GM12878 (cell line): ENCODE measurements at regions of chr4 and their contacts with region 1.

Region 1: GRCh38 chr4:37452952-37453280 is 208.4 kb downstream of the NWD2 start:
- DNase-seq: peak; percentile 23
- ATAC-seq: peak; percentile 92
- H3K4me3 ChIP-seq: no peak overlapping the region
- H3K27ac ChIP-seq: no peak overlapping the region
- H3K4me1 ChIP-seq: peaks cover 3% of the 10 kb centered on the region; the same call in 1 of the 2 replicates
- H3K27me3 ChIP-seq: peaks cover 8 to 13% of the 10 kb centered on the region in 2 experiments
- CTCF ChIP-seq: peak; percentile 55 to 76 (median 63); a peak in 5 of 6 replicates
- EP300 ChIP-seq: no peak
- POLR2A ChIP-seq: no peak
- RAD21 ChIP-seq: peak; percentile 80

Region 2: DNA sequence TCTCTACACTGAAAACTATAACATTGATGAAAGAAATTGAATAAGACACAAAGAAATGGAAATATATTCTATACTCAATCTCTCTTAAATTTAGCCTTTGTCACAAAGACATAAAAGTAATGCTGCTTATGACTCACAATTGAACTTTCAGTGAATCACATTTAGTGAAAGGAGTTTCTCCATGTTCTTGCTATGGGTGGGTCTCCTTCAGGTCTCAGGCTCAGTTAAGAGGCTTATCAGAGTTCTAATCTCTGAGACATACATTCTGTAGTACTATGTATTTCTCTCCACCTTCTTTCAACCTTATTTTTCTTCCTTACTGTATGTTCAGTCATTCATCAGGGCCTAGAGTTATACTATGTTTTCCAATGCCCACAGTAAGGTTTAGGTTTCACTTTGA is 950.6 kb before region 1 on chr4:
- CTCF ChIA-PET with region 1: no interaction called
- POLR2A ChIA-PET with region 1: no interaction called
- RAD21 ChIA-PET with region 1: no interaction called
- SMC1A ChIA-PET with region 1: no interaction called
- in situ Hi-C with region 1: no loop called
- intact Hi-C with region 1: no loop called
- DNase-seq: no peak
- ATAC-seq: no peak
- H3K4me3 ChIP-seq: no peak overlapping the region
- H3K27ac ChIP-seq: no peak overlapping the region
- H3K4me1 ChIP-seq: no peaks in the 10 kb centered on the region
- H3K27me3 ChIP-seq: no peaks in the 10 kb centered on the region
- CTCF ChIP-seq: no peak
- EP300 ChIP-seq: no peak
- POLR2A ChIP-seq: no peak
- RAD21 ChIP-seq: no peak

Region 3: GRCh38 chr4:37441276-37441994 is 11.5 kb before region 1 on chr4:
- CTCF ChIA-PET with region 1: interaction called, 21 read pairs
- POLR2A ChIA-PET with region 1: no interaction called
- RAD21 ChIA-PET with region 1: no interaction called
- SMC1A ChIA-PET with region 1: interaction called, 5 read pairs
- in situ Hi-C with region 1: no loop called
- intact Hi-C with region 1: no loop called
- DNase-seq: no peak
- ATAC-seq: no peak
- H3K4me3 ChIP-seq: no peak overlapping the region
- H3K27ac ChIP-seq: no peak overlapping the region
- H3K4me1 ChIP-seq: no peaks in the 10 kb centered on the region
- H3K27me3 ChIP-seq: no peaks in the 10 kb centered on the region
- CTCF ChIP-seq: no peak
- EP300 ChIP-seq: no peak
- POLR2A ChIP-seq: no peak
- RAD21 ChIP-seq: no peak

Region 4: GRCh38 chr4:37561803-37562207 is 108.9 kb after region 1 on chr4:
- CTCF ChIA-PET with region 1: interaction called, 36 read pairs
- POLR2A ChIA-PET with region 1: no interaction called
- RAD21 ChIA-PET with region 1: interaction called, 6 read pairs
- SMC1A ChIA-PET with region 1: interaction called, 27 read pairs
- in situ Hi-C with region 1: loop called (anchors 5 kb)
- intact Hi-C with region 1: loop called (anchors 1 kb)
- DNase-seq: peak; percentile 34
- ATAC-seq: peak; percentile 92
- H3K4me3 ChIP-seq: no peak overlapping the region
- H3K27ac ChIP-seq: no peak overlapping the region
- H3K4me1 ChIP-seq: no peaks in the 10 kb centered on the region
- H3K27me3 ChIP-seq: no peaks in the 10 kb centered on the region
- CTCF ChIP-seq: no peak
- EP300 ChIP-seq: peak; percentile 50 to 73; a peak in 2 of 4 replicates
- POLR2A ChIP-seq: no peak
- RAD21 ChIP-seq: no peak

Region 5: GRCh38 chr4:37567841-37568240 is 114.9 kb after region 1 on chr4:
- CTCF ChIA-PET with region 1: interaction called, 36 read pairs
- POLR2A ChIA-PET with region 1: no interaction called
- RAD21 ChIA-PET with region 1: interaction called, 6 read pairs
- SMC1A ChIA-PET with region 1: interaction called, 27 read pairs
- in situ Hi-C with region 1: loop called (anchors 5 kb)
- intact Hi-C with region 1: loop called (anchors 1 kb)
- DNase-seq: no peak
- ATAC-seq: no peak
- H3K4me3 ChIP-seq: no peak overlapping the region
- H3K27ac ChIP-seq: no peak overlapping the region
- H3K4me1 ChIP-seq: no peaks in the 10 kb centered on the region
- H3K27me3 ChIP-seq: no peaks in the 10 kb centered on the region
- CTCF ChIP-seq: no peak
- EP300 ChIP-seq: no peak
- POLR2A ChIP-seq: no peak
- RAD21 ChIP-seq: no peak

Region 6: GRCh38 chr4:37793562-37793961 is 340.6 kb after region 1 on chr4:
- CTCF ChIA-PET with region 1: no interaction called
- POLR2A ChIA-PET with region 1: no interaction called
- RAD21 ChIA-PET with region 1: no interaction called
- SMC1A ChIA-PET with region 1: interaction called, 3 read pairs
- in situ Hi-C with region 1: no loop called
- intact Hi-C with region 1: loop called (anchors 2 kb)
- DNase-seq: no peak
- ATAC-seq: peak; percentile 79
- H3K4me3 ChIP-seq: no peak overlapping the region
- H3K27ac ChIP-seq: no peak overlapping the region
- H3K4me1 ChIP-seq: no peaks in the 10 kb centered on the region
- H3K27me3 ChIP-seq: no peaks in the 10 kb centered on the region
- CTCF ChIP-seq: peak; percentile 58 to 59 (median 59); a peak in 5 of 6 replicates
- EP300 ChIP-seq: no peak
- POLR2A ChIP-seq: no peak
- RAD21 ChIP-seq: peak; percentile 87

Region 7: GRCh38 chr4:38034986-38035882 is 582.3 kb after region 1 on chr4:
- CTCF ChIA-PET with region 1: interaction called, 6 read pairs
- POLR2A ChIA-PET with region 1: no interaction called
- RAD21 ChIA-PET with region 1: no interaction called
- SMC1A ChIA-PET with region 1: interaction called, 3 read pairs
- in situ Hi-C with region 1: loop called (anchors 10 kb)
- intact Hi-C with region 1: no loop called
- DNase-seq: no peak
- ATAC-seq: peak; percentile 74
- H3K4me3 ChIP-seq: no peak overlapping the region
- H3K27ac ChIP-seq: no peak overlapping the region
- H3K4me1 ChIP-seq: no peaks in the 10 kb centered on the region
- H3K27me3 ChIP-seq: no peaks in the 10 kb centered on the region
- CTCF ChIP-seq: peak; percentile 44 to 75 (median 64); a peak in 5 of 6 replicates
- EP300 ChIP-seq: no peak
- POLR2A ChIP-seq: no peak
- RAD21 ChIP-seq: peak; percentile 89

Region 8: DNA sequence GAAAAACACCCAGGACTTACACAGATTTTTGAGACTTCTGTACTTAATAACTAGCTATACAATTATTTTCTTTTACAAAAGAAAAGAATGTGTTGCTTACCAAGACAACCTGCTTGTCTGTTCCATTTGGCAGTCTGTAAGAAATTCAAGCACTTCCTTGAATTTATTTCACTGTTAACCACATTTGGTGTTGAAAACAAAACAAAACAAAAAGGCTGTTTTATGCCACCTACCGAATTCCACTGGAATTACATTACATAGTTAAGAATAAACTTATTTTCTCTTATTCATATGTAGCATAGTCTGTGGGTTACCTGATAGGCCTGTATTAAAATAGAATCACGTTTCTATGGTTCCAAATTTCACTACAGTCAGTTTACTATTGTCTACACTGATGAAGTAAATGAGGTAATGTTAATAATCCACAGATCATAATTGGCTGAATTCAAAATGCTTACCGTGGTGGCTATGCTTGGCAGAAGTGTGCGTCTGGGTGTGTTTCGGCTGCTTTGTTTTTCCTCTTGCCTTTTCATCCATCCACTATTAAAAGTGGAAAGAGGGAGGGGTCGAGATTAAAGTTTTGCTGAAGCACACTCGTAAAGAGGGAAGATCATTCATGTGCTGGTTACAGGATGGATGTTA is 1351.9 kb after region 1 on chr4 and contains the start of gene TLR1:
- CTCF ChIA-PET with region 1: no interaction called
- POLR2A ChIA-PET with region 1: no interaction called
- RAD21 ChIA-PET with region 1: no interaction called
- SMC1A ChIA-PET with region 1: no interaction called
- in situ Hi-C with region 1: no loop called
- intact Hi-C with region 1: no loop called
- DNase-seq: peak; percentile 62
- ATAC-seq: peak; percentile 67
- H3K4me3 ChIP-seq: peak within 1 kb of the TSS; percentile 41
- H3K27ac ChIP-seq: peak within 1 kb of the TSS; percentile 86
- H3K4me1 ChIP-seq: peaks cover 20% of the 10 kb centered on the region
- H3K27me3 ChIP-seq: no peaks in the 10 kb centered on the region
- CTCF ChIP-seq: peak; percentile 22 to 47 (median 38); a peak in 5 of 6 replicates
- EP300 ChIP-seq: no peak
- POLR2A ChIP-seq: no peak
- RAD21 ChIP-seq: peak; percentile 64
- polyA plus RNA-seq, gene TLR1: 9.3 to 9.5 TPM